ENCODE measurements at regions of chr4 and their contacts with region 1.

Region 1: GRCh38 chr4:7802093-7802726 is 137.5 kb downstream of the AFAP1 start:
- DNase-seq: peak; percentile 59 to 81 (median 77)
- ATAC-seq: peak; percentile 96
- H3K4me3 ChIP-seq: no peak overlapping the region
- H3K4me3 Mint-ChIP-seq: no peak overlapping the region
- H3K27ac ChIP-seq: no peak overlapping the region
- H3K27ac Mint-ChIP-seq: no peak overlapping the region
- H3K4me1 ChIP-seq: no peaks in the 10 kb centered on the region
- H3K4me1 Mint-ChIP-seq: peaks cover 9% of the 10 kb centered on the region
- H3K27me3 ChIP-seq: no peaks in the 10 kb centered on the region
- H3K27me3 Mint-ChIP-seq: no peaks in the 10 kb centered on the region
- CTCF ChIP-seq: peak; percentile 89

Region 2: DNA sequence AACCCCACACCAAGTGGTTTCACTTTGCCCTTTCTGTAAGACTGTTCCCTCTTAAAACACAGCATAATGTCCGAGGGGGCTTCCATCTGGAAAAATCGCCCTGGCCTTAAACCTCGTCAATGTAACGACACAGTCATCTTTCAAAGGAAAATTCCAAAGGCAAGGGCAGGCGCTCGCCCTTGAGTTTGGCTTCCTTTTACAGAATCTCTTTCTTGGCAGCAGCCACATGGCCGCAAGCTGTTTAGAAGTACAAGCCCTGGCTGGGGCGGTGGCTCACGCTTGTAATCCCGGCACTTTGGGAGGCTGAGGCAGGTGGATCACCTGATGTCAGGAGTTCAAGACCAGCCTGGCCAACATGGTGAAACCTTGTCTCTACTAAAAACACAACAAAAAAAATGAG is 707.3 kb before region 1 on chr4:
- CTCF ChIA-PET with region 1: no interaction called
- POLR2A ChIA-PET with region 1: no interaction called
- intact Hi-C with region 1: no loop called
- DNase-seq: no peak
- ATAC-seq: no peak
- H3K4me3 ChIP-seq: no peak overlapping the region
- H3K4me3 Mint-ChIP-seq: no peak overlapping the region
- H3K27ac ChIP-seq: no peak overlapping the region
- H3K27ac Mint-ChIP-seq: no peak overlapping the region
- H3K4me1 ChIP-seq: no peaks in the 10 kb centered on the region
- H3K4me1 Mint-ChIP-seq: no peaks in the 10 kb centered on the region
- H3K27me3 ChIP-seq: no peaks in the 10 kb centered on the region
- H3K27me3 Mint-ChIP-seq: peaks cover 16% of the 10 kb centered on the region
- CTCF ChIP-seq: no peak

Region 3: DNA sequence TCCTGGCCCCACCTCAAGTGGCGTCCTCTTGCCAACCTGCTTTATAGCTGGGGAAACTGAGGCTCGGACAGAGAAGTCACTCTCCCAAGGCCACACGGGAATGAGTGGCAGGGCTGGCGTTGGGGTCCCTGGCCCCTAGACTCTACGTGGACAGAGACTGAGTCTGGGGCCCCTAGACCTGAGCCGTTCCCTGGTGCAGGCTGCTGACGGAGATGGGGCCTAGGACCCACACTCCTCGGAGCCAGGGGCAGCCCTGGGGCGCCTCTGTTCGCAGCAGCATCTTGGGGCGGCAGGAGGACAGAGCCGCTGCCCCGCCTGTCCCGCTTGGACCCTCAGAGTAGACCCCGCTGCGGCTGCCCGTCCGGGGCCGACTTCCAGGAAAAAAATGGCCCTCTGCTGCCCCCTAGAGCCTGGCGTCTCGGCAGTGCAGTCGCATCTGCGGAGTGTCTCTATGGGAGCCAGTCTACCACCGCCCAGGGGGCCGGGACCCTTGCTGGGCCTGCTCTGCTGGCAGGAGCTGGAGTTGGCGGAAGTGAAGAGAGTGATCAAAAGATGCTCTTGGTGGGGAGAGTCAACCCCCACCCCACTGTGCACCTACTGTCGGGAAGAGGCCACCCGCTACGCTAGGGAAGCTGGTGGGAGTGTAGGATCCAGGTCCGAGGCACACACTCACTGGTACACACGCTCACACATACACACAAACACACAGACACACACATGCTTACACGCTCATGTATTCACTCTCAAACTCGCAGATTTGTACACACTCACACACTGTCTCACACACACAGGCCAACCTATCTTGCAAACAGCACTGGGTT is 82.6 kb before region 1 on chr4:
- CTCF ChIA-PET with region 1: interaction called, 6 read pairs
- POLR2A ChIA-PET with region 1: no interaction called
- intact Hi-C with region 1: loop called (anchors 1 to 5 kb)
- DNase-seq: peak; percentile 24 to 71 (median 54)
- ATAC-seq: no peak
- H3K4me3 ChIP-seq: no peak overlapping the region
- H3K4me3 Mint-ChIP-seq: no peak overlapping the region
- H3K27ac ChIP-seq: no peak overlapping the region
- H3K27ac Mint-ChIP-seq: no peak overlapping the region
- H3K4me1 ChIP-seq: no peaks in the 10 kb centered on the region
- H3K4me1 Mint-ChIP-seq: no peaks in the 10 kb centered on the region
- H3K27me3 ChIP-seq: peaks cover 0 to 4% of the 10 kb centered on the region in 2 experiments
- H3K27me3 Mint-ChIP-seq: peaks cover 24% of the 10 kb centered on the region
- CTCF ChIP-seq: peak; percentile 70

Region 4: GRCh38 chr4:7770224-7771050 is 31.8 kb before region 1 on chr4:
- CTCF ChIA-PET with region 1: interaction called, 11 read pairs
- POLR2A ChIA-PET with region 1: no interaction called
- intact Hi-C with region 1: loop called in 1 of 2 experiments (anchors 2 kb)
- DNase-seq: no peak
- ATAC-seq: no peak
- H3K4me3 ChIP-seq: no peak overlapping the region
- H3K4me3 Mint-ChIP-seq: peak overlapping the region; percentile 47
- H3K27ac ChIP-seq: no peak overlapping the region
- H3K27ac Mint-ChIP-seq: peak overlapping the region; percentile 75
- H3K4me1 ChIP-seq: peaks cover 15% of the 10 kb centered on the region
- H3K4me1 Mint-ChIP-seq: peaks cover 20% of the 10 kb centered on the region
- H3K27me3 ChIP-seq: no peaks in the 10 kb centered on the region
- H3K27me3 Mint-ChIP-seq: no peaks in the 10 kb centered on the region
- CTCF ChIP-seq: no peak

Region 5: DNA sequence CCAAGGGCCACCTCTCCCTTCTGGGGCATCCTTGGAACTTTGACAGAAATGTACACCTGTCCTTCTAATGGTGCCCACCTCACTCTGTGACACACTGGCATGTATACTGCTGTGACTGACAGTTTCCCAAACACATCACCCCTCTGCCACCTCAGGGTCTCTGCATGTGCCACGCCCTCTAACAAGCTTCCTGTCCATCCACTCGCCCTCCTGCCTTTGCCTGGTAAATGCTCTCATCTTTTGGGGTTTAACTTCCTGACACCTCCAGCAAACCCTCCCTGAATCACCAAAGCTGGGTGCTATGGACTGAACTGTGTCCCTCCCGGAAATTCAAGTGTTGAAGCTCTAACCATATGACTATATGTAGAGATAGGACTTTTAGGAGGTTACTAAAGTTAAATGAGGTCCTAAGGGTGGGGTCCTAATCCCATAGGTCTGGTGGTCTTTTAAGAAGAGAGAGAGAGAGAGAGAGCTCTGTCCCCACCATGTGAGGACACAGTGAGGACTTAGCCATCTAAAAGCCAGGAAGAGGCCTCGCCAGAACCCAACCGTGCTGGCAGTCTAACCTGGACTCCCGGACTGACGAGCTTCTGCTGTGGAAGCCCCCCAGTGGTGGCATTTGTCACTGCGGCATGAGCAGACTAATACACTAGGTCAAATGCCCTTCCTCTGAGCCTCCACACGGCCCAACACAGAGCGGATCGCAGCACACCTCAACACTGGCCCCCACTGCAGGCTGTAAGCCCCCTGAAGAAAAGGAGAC is 41.8 kb after region 1 on chr4:
- CTCF ChIA-PET with region 1: interaction called, 32 read pairs
- POLR2A ChIA-PET with region 1: no interaction called
- intact Hi-C with region 1: loop called (anchors 1 kb)
- DNase-seq: peak; percentile 42 to 82 (median 74)
- ATAC-seq: peak; percentile 94
- H3K4me3 ChIP-seq: no peak overlapping the region
- H3K4me3 Mint-ChIP-seq: no peak overlapping the region
- H3K27ac ChIP-seq: no peak overlapping the region
- H3K27ac Mint-ChIP-seq: no peak overlapping the region
- H3K4me1 ChIP-seq: no peaks in the 10 kb centered on the region
- H3K4me1 Mint-ChIP-seq: peaks cover 26% of the 10 kb centered on the region
- H3K27me3 ChIP-seq: no peaks in the 10 kb centered on the region
- H3K27me3 Mint-ChIP-seq: no peaks in the 10 kb centered on the region
- CTCF ChIP-seq: peak; percentile 60

Region 6: GRCh38 chr4:7876201-7876875 is 74.1 kb after region 1 on chr4:
- CTCF ChIA-PET with region 1: interaction called, 6 read pairs
- POLR2A ChIA-PET with region 1: no interaction called
- intact Hi-C with region 1: loop called in 1 of 2 experiments (anchors 1 kb)
- DNase-seq: peak in 4 of 9 experiments; percentile 30 to 53 (median 36)
- ATAC-seq: peak; percentile 66
- H3K4me3 ChIP-seq: no peak overlapping the region
- H3K4me3 Mint-ChIP-seq: peak overlapping the region; percentile 42
- H3K27ac ChIP-seq: peak overlapping the region in 1 of 2 experiments; percentile 29
- H3K27ac Mint-ChIP-seq: peak overlapping the region; percentile 19
- H3K4me1 ChIP-seq: peaks cover 8% of the 10 kb centered on the region
- H3K4me1 Mint-ChIP-seq: peaks cover 35% of the 10 kb centered on the region
- H3K27me3 ChIP-seq: no peaks in the 10 kb centered on the region
- H3K27me3 Mint-ChIP-seq: no peaks in the 10 kb centered on the region
- CTCF ChIP-seq: no peak

Measured in CD8-positive, alpha-beta T cell (primary cell).